Ascending aorta (tissue), 2 donors: ENCODE measurements at regions of chr9 and their contacts with region 1.

Region 1: GRCh38 chr9:110183208-110184145 is 24.5 kb downstream of the C9orf152 start:
- DNase-seq: peak in 1 of 2 donors; percentile 75
- H3K4me3 ChIP-seq: no peak overlapping the region
- H3K27ac ChIP-seq: no peak overlapping the region
- H3K4me1 ChIP-seq: no peaks in the 10 kb centered on the region
- H3K27me3 ChIP-seq: no peaks in the 10 kb centered on the region
- CTCF ChIP-seq: peak; percentile 60 to 72 (median 64)

Region 2: DNA sequence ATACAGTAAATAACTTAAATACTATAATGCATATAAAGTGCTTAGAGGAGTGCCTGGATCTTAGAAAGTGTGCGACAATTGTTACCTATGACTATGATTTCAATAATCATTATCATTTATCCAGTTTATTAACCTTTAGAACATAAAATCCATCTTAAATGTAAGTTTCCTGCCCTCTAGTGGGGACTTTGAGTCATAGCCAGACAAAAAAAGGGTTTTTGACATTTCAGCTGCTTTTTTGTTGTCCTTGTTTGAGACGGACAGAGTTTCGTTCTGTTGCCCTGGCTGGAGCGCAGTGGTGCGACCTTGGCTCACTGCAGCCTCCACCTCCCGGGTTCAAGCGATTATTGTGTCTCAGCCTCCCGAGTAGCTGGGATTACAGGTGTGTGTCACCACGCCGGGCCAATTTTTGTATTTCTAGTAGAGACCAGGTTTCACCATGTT is 34.2 kb after region 1 on chr9:
- intact Hi-C with region 1: loop called (anchors 2 kb)
- DNase-seq: peak in 1 of 2 donors; percentile 52
- H3K4me3 ChIP-seq: no peak overlapping the region
- H3K27ac ChIP-seq: no peak overlapping the region
- H3K4me1 ChIP-seq: no peaks in the 10 kb centered on the region
- H3K27me3 ChIP-seq: no peaks in the 10 kb centered on the region
- CTCF ChIP-seq: peak; percentile 66 to 82 (median 73)